Activated CD4-positive, alpha-beta memory T cell treated with anti-CD3 and anti-CD28 coated beads for 36 hours (primary cell): ENCODE measurements at regions of chr17 and their contacts with region 1.

Region 1: GRCh38 chr17:17752089-17752820 is 71.0 kb downstream of the RAI1 start:
- DNase-seq: peak; percentile 99
- H3K4me3 Mint-ChIP-seq: peak overlapping the region; percentile 96
- H3K27ac Mint-ChIP-seq: peak overlapping the region; percentile 93
- H3K4me1 Mint-ChIP-seq: peaks cover 39% of the 10 kb centered on the region
- H3K27me3 Mint-ChIP-seq: no peaks in the 10 kb centered on the region

Region 2: GRCh38 chr17:17729620-17730249 is 22.5 kb before region 1 on chr17:
- CTCF ChIA-PET with region 1: no interaction called
- POLR2A ChIA-PET with region 1: interaction called, 3 read pairs
- intact Hi-C with region 1: loop called (anchors 1 kb)
- DNase-seq: peak; percentile 69
- H3K4me3 Mint-ChIP-seq: no peak overlapping the region
- H3K27ac Mint-ChIP-seq: no peak overlapping the region
- H3K4me1 Mint-ChIP-seq: peaks cover 4% of the 10 kb centered on the region
- H3K27me3 Mint-ChIP-seq: no peaks in the 10 kb centered on the region

Region 3: GRCh38 chr17:17783116-17783824 is 31.0 kb after region 1 on chr17:
- CTCF ChIA-PET with region 1: no interaction called
- POLR2A ChIA-PET with region 1: no interaction called
- intact Hi-C with region 1: loop called (anchors 2 kb)
- DNase-seq: peak; percentile 75
- H3K4me3 Mint-ChIP-seq: peak overlapping the region; percentile 67
- H3K27ac Mint-ChIP-seq: no peak overlapping the region
- H3K4me1 Mint-ChIP-seq: peaks cover 7% of the 10 kb centered on the region
- H3K27me3 Mint-ChIP-seq: no peaks in the 10 kb centered on the region

Region 4: DNA sequence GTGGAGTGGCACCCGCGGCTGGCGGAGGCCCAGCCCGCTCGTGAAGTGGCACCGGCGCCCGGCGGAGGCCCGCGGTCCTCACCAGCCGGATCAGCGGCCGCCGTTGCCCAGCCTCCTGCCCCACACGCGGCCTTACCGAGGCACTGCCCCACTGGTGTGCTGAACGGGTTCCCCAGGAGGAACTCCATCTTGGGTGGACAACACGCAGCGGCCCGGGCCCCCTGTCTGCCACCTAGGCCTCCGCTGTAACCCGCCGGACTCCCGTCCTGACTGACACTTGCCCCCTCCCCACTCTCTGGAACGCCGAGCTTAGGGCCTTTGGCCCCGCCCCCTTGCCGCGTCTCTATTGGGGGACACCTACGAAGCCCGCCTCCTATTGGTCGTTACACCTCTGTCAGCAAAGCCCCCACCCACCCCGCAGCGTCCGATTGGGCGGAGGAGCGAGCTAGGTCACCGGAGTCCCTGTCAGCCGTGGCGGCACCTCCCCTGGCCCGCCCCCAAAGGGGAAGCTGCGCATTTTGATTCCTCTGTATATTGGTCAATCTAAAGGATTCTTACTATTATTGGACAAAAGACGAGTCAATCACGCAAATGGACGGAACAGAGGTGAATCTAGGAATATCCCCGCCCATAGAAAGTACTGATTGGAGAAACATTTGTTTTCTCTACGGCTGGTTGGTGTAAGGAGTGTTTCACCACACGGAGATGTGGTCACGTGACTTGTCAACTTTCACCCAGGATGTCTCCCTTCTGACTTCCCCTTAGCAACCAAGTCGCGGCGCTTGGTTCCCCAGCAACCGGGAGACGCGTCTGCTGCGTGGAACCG is 220.1 kb after region 1 on chr17 and contains the starts of genes DRC3 and TOM1L2:
- CTCF ChIA-PET with region 1: no interaction called
- POLR2A ChIA-PET with region 1: no interaction called
- intact Hi-C with region 1: loop called (anchors 5 kb)
- DNase-seq: peak; percentile 100
- H3K4me3 Mint-ChIP-seq: peak within 1 kb of the TSS; percentile 91
- H3K27ac Mint-ChIP-seq: peak within 1 kb of the TSS; percentile 78
- H3K4me1 Mint-ChIP-seq: peaks cover 35% of the 10 kb centered on the region
- H3K27me3 Mint-ChIP-seq: no peaks in the 10 kb centered on the region
- total RNA-seq, gene DRC3: 0.34 to 0.52 TPM
- total RNA-seq, gene TOM1L2: 11.1 to 12.7 TPM